ENCODE measurements at regions of chr1 and their contacts with region 1.

Region 1: GRCh38 chr1:89762779-89763648 is 57.8 kb upstream of the LRRC8D start:
- DNase-seq: peak; percentile 88
- H3K4me3 Mint-ChIP-seq: peak overlapping the region; percentile 78
- H3K27ac Mint-ChIP-seq: peak overlapping the region; percentile 75
- H3K4me1 Mint-ChIP-seq: peaks cover 59% of the 10 kb centered on the region
- H3K27me3 Mint-ChIP-seq: peaks cover 1% of the 10 kb centered on the region

Region 2: GRCh38 chr1:89524369-89525168 is 238.4 kb before region 1 on chr1 and contains the start of gene LRRC8B:
- CTCF ChIA-PET with region 1: interaction called, 11 read pairs
- POLR2A ChIA-PET with region 1: interaction called, 4 read pairs
- DNase-seq: peak; percentile 92
- H3K4me3 Mint-ChIP-seq: no peak within 1 kb of the TSS
- H3K27ac Mint-ChIP-seq: peak within 1 kb of the TSS; percentile 93
- H3K4me1 Mint-ChIP-seq: peaks cover 27% of the 10 kb centered on the region
- H3K27me3 Mint-ChIP-seq: no peaks in the 10 kb centered on the region
- total RNA-seq, gene LRRC8B: 21.3 to 21.7 TPM

Region 3: GRCh38 chr1:89622895-89623294 is 140.1 kb before region 1 on chr1:
- CTCF ChIA-PET with region 1: interaction called, 174 read pairs
- POLR2A ChIA-PET with region 1: interaction called, 96 read pairs
- DNase-seq: no peak
- H3K4me3 Mint-ChIP-seq: no peak overlapping the region
- H3K27ac Mint-ChIP-seq: no peak overlapping the region
- H3K4me1 Mint-ChIP-seq: peaks cover 59% of the 10 kb centered on the region
- H3K27me3 Mint-ChIP-seq: no peaks in the 10 kb centered on the region

Region 4: GRCh38 chr1:89657886-89658285 is 105.1 kb before region 1 on chr1:
- CTCF ChIA-PET with region 1: interaction called, 15 read pairs
- POLR2A ChIA-PET with region 1: interaction called, 5 read pairs
- DNase-seq: no peak
- H3K4me3 Mint-ChIP-seq: peak overlapping the region; percentile 15
- H3K27ac Mint-ChIP-seq: peak overlapping the region; percentile 81
- H3K4me1 Mint-ChIP-seq: peaks cover 88% of the 10 kb centered on the region
- H3K27me3 Mint-ChIP-seq: no peaks in the 10 kb centered on the region

Region 5: GRCh38 chr1:89675677-89676076 is 87.3 kb before region 1 on chr1:
- CTCF ChIA-PET with region 1: interaction called, 32 read pairs
- POLR2A ChIA-PET with region 1: interaction called, 14 read pairs
- DNase-seq: no peak
- H3K4me3 Mint-ChIP-seq: no peak overlapping the region
- H3K27ac Mint-ChIP-seq: peak overlapping the region; percentile 33
- H3K4me1 Mint-ChIP-seq: peaks cover 73% of the 10 kb centered on the region
- H3K27me3 Mint-ChIP-seq: no peaks in the 10 kb centered on the region

Region 6: GRCh38 chr1:89701746-89702241 is 61.2 kb before region 1 on chr1:
- CTCF ChIA-PET with region 1: interaction called, 15 read pairs
- POLR2A ChIA-PET with region 1: interaction called, 13 read pairs
- DNase-seq: no peak
- H3K4me3 Mint-ChIP-seq: no peak overlapping the region
- H3K27ac Mint-ChIP-seq: peak overlapping the region; percentile 21
- H3K4me1 Mint-ChIP-seq: peaks cover 72% of the 10 kb centered on the region
- H3K27me3 Mint-ChIP-seq: no peaks in the 10 kb centered on the region

Region 7: DNA sequence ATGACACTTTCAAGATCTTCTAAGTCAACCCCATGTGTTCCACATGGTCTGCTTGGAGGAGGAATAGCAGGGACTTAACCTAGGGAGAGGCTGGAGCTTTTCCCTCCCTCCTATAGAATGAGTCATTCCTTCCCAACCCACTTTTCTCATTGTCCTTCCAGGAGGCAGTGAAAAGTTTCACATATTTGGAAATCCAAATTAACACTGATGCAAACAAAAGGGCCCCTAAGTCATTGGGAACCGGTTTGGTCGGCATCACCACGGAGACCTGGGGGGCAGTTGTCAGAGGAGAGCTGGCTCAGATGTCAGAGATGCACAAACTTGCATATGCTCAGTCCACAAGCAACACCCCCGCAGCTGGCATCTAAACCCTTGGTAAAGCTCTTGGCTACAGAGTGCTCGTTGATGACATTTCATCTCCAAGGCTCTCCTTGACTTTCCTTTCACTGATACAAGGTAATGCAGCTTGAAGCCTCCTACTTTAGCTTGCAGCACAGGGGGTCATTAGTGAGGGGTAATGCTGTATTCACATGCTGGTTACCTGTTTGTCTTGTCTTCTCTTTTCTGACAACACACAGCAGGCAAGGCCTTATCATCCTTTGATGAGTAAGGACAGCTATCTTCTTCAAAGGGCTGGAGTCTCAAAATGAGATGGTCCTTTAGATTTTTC is 45.6 kb after region 1 on chr1:
- CTCF ChIA-PET with region 1: no interaction called
- POLR2A ChIA-PET with region 1: no interaction called
- DNase-seq: no peak
- H3K4me3 Mint-ChIP-seq: no peak overlapping the region
- H3K27ac Mint-ChIP-seq: no peak overlapping the region
- H3K4me1 Mint-ChIP-seq: no peaks in the 10 kb centered on the region
- H3K27me3 Mint-ChIP-seq: peaks cover 4% of the 10 kb centered on the region